ENCODE measurements at regions of chr15 and their contacts with region 1.

Region 1: GRCh38 chr15:38991126-38991525 is 426.5 kb upstream of the RASGRP1 start:
- DNase-seq: peak; percentile 13
- ATAC-seq: no peak; the same call in 2 of the 3 replicates
- H3K4me3 ChIP-seq: no peak overlapping the region
- H3K27ac ChIP-seq: no peak overlapping the region
- H3K4me1 ChIP-seq: no peaks in the 10 kb centered on the region; the same call in 1 of the 2 replicates
- H3K27me3 ChIP-seq: no peaks in the 10 kb centered on the region; a peak in 2 of 5 replicates
- CTCF ChIP-seq: peak; percentile 49
- EP300 ChIP-seq: no peak
- POLR2A ChIP-seq: no peak
- RAD21 ChIP-seq: no peak

Region 2: DNA sequence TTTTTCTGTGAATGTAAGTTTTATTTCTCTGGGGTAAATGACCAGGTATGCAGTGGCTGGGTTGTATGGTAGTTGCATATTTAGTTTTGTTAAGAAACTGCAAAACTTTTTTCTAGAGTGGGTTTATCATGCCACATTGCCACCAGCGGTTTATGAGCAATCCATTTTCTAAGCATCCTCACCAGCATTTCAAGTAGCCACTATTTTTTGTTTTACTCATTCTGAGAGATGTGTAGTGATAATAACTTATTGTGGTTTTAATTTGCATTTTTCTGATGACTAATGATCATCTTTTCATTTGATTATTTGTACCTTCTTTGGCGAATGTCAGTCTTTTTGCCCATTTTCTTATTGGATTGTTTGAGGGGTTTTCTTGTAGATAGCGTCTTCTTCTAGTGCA is 682.3 kb before region 1 on chr15:
- CTCF ChIA-PET with region 1: no interaction called
- POLR2A ChIA-PET with region 1: no interaction called
- in situ Hi-C with region 1: no loop called
- intact Hi-C with region 1: no loop called
- DNase-seq: no peak
- ATAC-seq: no peak
- H3K4me3 ChIP-seq: no peak overlapping the region
- H3K27ac ChIP-seq: no peak overlapping the region
- H3K4me1 ChIP-seq: no peaks in the 10 kb centered on the region
- H3K27me3 ChIP-seq: no peaks in the 10 kb centered on the region
- CTCF ChIP-seq: no peak
- EP300 ChIP-seq: no peak
- POLR2A ChIP-seq: no peak
- RAD21 ChIP-seq: no peak

Region 3: DNA sequence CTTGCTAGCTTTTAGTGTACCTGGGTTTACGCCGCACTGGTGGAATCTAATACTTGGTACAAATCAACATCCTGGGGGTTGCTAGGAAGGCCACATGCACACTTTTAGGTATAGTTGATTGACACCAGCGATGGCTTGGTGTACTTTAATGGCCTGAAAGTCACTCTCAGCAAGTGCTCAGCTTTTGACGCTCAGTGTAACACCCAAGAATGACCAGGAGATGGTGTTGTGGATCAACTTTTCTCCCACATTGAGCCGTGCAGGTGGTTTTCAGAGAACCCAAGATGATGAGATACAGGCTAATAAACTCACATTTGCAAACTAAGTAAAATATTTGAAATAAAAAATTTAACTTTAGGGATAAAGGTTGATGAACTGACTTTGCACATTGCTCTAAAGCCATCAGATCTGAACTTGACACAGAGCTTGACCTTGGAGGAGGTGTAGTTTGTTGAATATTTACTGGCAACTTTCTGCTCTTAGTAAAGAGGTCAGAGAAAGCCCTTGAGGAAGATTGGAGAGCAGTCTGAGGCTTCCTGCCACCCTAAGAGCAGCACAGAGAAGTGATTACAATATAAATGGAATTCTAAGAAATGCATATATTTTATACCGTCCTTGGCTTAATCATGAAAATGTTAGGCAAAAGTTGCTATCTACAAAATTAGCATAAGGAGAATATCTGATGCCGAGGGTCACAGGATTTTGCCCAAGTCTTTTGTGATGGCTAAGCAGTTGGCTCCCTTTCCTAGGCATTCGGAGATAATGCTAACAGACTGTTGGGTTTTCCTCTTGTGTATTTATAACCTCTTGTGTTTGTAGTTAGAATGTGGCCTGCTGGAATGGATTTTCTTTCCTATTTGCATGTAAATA is 283.1 kb before region 1 on chr15:
- CTCF ChIA-PET with region 1: interaction called, 5 read pairs
- POLR2A ChIA-PET with region 1: no interaction called
- in situ Hi-C with region 1: no loop called
- intact Hi-C with region 1: loop called (anchors 5 kb)
- DNase-seq: peak; percentile 39
- ATAC-seq: peak; percentile 88
- H3K4me3 ChIP-seq: no peak overlapping the region
- H3K27ac ChIP-seq: no peak overlapping the region
- H3K4me1 ChIP-seq: peaks cover under 1% of the 10 kb centered on the region; the same call in 1 of the 2 replicates
- H3K27me3 ChIP-seq: peaks cover 0 to 11% of the 10 kb centered on the region in 2 experiments; a peak in 2 of 5 replicates
- CTCF ChIP-seq: peak; percentile 78
- EP300 ChIP-seq: no peak
- POLR2A ChIP-seq: no peak
- RAD21 ChIP-seq: peak; percentile 53; the same call in 1 of the 2 replicates

Region 4: DNA sequence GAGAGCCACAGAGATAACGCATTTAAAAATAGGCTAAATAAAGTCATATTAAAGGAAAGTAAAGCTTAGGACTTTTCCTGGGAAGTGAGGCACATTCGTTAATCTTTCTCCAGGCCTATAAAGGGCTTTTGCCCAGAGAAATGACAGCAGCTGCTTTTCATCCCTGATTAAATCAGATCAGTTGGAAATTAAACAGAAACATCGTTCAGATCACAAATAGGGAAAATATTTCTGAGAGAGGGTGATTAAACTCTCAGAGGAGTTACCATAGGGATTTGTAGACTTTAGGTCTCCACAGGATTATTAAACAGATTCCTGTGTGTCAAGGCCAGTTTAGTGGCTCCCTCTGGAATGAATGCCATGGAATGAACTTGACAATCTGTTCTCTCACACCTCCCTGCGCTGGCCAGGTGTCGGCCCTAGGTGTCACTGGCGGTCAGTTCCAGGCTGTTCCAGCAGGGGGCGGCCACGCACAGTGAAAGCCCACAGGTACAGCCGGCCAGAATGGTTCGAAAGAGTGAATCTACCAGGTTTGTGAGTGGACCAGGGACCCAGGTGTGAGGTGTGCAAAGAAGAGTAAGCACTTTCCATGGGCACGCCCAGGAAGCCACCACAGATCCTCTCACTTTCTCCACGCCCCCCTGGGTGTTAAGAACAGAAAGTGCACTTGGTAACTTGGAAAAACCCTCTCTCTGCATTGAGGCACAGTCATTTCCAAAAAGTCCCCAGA is 173.5 kb before region 1 on chr15:
- CTCF ChIA-PET with region 1: interaction called, 3 read pairs
- POLR2A ChIA-PET with region 1: no interaction called
- in situ Hi-C with region 1: no loop called
- intact Hi-C with region 1: loop called (anchors 1 kb)
- DNase-seq: peak; percentile 66
- ATAC-seq: peak; percentile 100
- H3K4me3 ChIP-seq: no peak overlapping the region
- H3K27ac ChIP-seq: no peak overlapping the region
- H3K4me1 ChIP-seq: no peaks in the 10 kb centered on the region
- H3K27me3 ChIP-seq: peaks cover 0 to 5% of the 10 kb centered on the region in 2 experiments; a peak in 2 of 5 replicates
- CTCF ChIP-seq: peak; percentile 98
- EP300 ChIP-seq: no peak
- POLR2A ChIP-seq: no peak
- RAD21 ChIP-seq: peak; percentile 91

Measured in HepG2 (cell line).